CD8-positive, alpha-beta T cell (primary cell): ENCODE measurements at regions of chr14 and their contacts with region 1.

Region 1: GRCh38 chr14:102086972-102087761 is at the start of gene HSP90AA1:
- DNase-seq: peak; percentile 88 to 98 (median 95)
- ATAC-seq: peak; percentile 74
- H3K4me3 ChIP-seq: peak within 1 kb of the TSS; percentile 75 to 78
- H3K4me3 Mint-ChIP-seq: peak within 1 kb of the TSS; percentile 97
- H3K27ac ChIP-seq: peak within 1 kb of the TSS; percentile 96 to 97
- H3K27ac Mint-ChIP-seq: peak within 1 kb of the TSS; percentile 99
- H3K4me1 ChIP-seq: peaks cover 49% of the 10 kb centered on the region
- H3K4me1 Mint-ChIP-seq: peaks cover 58% of the 10 kb centered on the region
- H3K27me3 ChIP-seq: no peaks in the 10 kb centered on the region
- H3K27me3 Mint-ChIP-seq: no peaks in the 10 kb centered on the region
- CTCF ChIP-seq: no peak
- total RNA-seq, gene HSP90AA1: 532 to 539 TPM

Region 2: GRCh38 chr14:101731187-101732080 is 355.7 kb before region 1 on chr14:
- CTCF ChIA-PET with region 1: no interaction called
- POLR2A ChIA-PET with region 1: no interaction called
- intact Hi-C with region 1: loop called in 1 of 2 experiments (anchors 1 kb)
- DNase-seq: peak; percentile 50 to 96 (median 80)
- ATAC-seq: peak; percentile 87
- H3K4me3 ChIP-seq: peak overlapping the region; percentile 24 to 28
- H3K4me3 Mint-ChIP-seq: peak overlapping the region; percentile 76
- H3K27ac ChIP-seq: peak overlapping the region; percentile 76 to 83
- H3K27ac Mint-ChIP-seq: peak overlapping the region; percentile 97
- H3K4me1 ChIP-seq: peaks cover 23% of the 10 kb centered on the region
- H3K4me1 Mint-ChIP-seq: peaks cover 44% of the 10 kb centered on the region
- H3K27me3 ChIP-seq: no peaks in the 10 kb centered on the region
- H3K27me3 Mint-ChIP-seq: no peaks in the 10 kb centered on the region
- CTCF ChIP-seq: no peak

Region 3: DNA sequence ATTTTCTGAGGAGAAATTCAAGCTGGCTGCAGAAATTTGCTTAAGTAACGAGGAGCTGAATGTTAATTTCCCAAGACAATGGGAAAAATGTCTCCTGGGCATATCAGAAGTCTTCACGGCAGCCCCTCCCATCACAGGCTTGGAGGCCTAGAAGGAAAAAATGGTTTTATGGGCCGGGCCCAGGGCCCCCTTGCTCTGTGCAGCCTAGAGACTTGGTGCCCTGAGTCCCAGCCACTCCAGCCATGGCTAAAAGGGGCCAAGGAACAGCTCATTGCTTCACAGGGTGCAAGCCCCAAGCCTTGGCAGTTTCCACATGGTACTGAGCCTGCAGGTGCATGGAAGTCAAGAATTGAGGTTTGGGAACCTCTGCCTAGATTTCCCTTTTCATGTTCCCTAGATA is 23.9 kb after region 1 on chr14:
- CTCF ChIA-PET with region 1: no interaction called
- POLR2A ChIA-PET with region 1: no interaction called
- intact Hi-C with region 1: no loop called
- DNase-seq: no peak
- ATAC-seq: no peak
- H3K4me3 ChIP-seq: no peak overlapping the region
- H3K4me3 Mint-ChIP-seq: no peak overlapping the region
- H3K27ac ChIP-seq: no peak overlapping the region
- H3K27ac Mint-ChIP-seq: no peak overlapping the region
- H3K4me1 ChIP-seq: no peaks in the 10 kb centered on the region
- H3K4me1 Mint-ChIP-seq: no peaks in the 10 kb centered on the region
- H3K27me3 ChIP-seq: no peaks in the 10 kb centered on the region
- H3K27me3 Mint-ChIP-seq: no peaks in the 10 kb centered on the region
- CTCF ChIP-seq: no peak

Region 4: DNA sequence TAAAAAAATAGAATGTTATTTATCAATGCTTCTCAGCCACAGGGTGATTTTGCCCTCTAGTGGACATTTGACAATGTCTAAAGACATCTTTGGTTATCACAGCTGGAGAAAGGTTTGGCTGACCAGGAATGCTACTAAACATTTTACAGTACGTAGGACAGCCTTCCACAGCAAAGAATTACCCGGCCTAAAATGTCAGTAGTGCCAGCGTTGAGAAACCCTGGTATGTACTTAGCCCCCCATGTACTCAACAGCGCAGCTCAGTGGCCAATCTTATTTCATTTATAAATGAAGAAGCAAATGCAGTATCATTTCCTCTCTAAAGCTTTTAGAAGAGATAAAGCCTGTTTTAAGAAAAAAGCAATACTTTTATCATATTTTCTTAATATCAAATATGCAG is 1303.9 kb after region 1 on chr14:
- CTCF ChIA-PET with region 1: no interaction called
- POLR2A ChIA-PET with region 1: no interaction called
- intact Hi-C with region 1: no loop called
- DNase-seq: peak; percentile 4 to 78 (median 54)
- ATAC-seq: peak; percentile 74
- H3K4me3 ChIP-seq: no peak overlapping the region
- H3K4me3 Mint-ChIP-seq: no peak overlapping the region
- H3K27ac ChIP-seq: peak overlapping the region in 1 of 2 experiments; percentile 3
- H3K27ac Mint-ChIP-seq: peak overlapping the region; percentile 10
- H3K4me1 ChIP-seq: peaks cover 57% of the 10 kb centered on the region
- H3K4me1 Mint-ChIP-seq: peaks cover 66% of the 10 kb centered on the region
- H3K27me3 ChIP-seq: no peaks in the 10 kb centered on the region
- H3K27me3 Mint-ChIP-seq: no peaks in the 10 kb centered on the region
- CTCF ChIP-seq: peak; percentile 83